HepG2 (cell line): ENCODE measurements at regions of chr3 and their contacts with region 1.

Region 1: DNA sequence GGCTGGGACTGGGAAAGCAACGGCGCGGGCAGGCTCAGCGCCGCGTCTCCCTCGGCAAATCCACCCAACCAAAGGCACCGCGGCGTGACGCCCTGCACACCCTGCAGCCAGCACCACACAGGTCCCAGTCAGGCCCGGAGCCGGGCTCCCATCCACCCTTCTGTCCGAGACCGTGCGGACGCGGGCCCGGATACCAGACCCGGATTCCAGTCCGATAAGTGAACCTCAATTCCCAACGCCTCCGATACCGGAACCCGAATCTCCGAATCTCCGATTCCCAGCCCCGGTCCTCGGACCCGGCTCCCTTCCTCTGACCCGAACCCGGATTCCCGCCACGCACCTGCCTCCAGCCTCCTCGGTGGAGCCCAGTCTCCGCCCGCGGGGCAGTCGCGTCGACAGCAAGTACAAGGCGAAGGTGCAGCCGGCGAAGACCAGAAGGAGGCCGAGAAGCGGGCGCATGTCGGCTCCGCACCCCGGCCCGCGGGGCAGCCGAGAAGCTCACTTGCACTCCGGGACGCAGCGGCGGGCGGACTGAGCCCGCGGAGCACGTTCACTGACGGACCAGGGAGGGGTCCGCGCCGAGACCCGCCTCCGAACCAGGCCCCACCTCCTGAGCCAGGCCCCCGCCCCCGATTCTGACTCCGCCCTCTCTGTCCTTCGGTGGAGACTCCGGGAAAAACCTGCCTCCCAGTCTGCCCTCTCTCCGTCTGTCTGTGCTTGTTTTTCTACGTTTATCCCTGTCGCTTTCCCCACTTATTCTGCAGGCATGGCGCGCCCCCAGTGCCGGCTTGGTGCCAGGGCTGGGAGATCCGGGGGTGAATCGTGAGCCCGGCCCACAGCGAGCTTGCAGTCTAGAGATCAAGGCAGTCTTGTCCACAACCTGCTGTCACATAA is at the start of gene TMEM41A:
- DNase-seq: peak; percentile 75
- ATAC-seq: peak; percentile 92
- H3K4me3 ChIP-seq: peak within 1 kb of the TSS; percentile 97 to 99 (median 99)
- H3K27ac ChIP-seq: peak within 1 kb of the TSS; percentile 95
- H3K4me1 ChIP-seq: peaks cover 46% of the 10 kb centered on the region
- H3K27me3 ChIP-seq: no peaks in the 10 kb centered on the region
- CTCF ChIP-seq: peak; percentile 29
- EP300 ChIP-seq: peak; percentile 37 to 56; a peak in 2 of 4 replicates
- POLR2A ChIP-seq: peak; percentile 91 to 92
- RAD21 ChIP-seq: peak; percentile 55
- total RNA-seq, gene TMEM41A: 24.2 and 40.0 TPM in 2 replicates

Region 2: GRCh38 chr3:185585859-185586685 is 87.3 kb after region 1 on chr3 and contains the start of gene SENP2:
- CTCF ChIA-PET with region 1: no interaction called
- POLR2A ChIA-PET with region 1: interaction called, 3 read pairs
- in situ Hi-C with region 1: no loop called
- intact Hi-C with region 1: loop called (anchors 5 kb)
- DNase-seq: peak; percentile 98
- ATAC-seq: peak; percentile 98
- H3K4me3 ChIP-seq: peak within 1 kb of the TSS; percentile 84 to 93 (median 89)
- H3K27ac ChIP-seq: peak within 1 kb of the TSS; percentile 82
- H3K4me1 ChIP-seq: peaks cover 33% of the 10 kb centered on the region
- H3K27me3 ChIP-seq: no peaks in the 10 kb centered on the region; a peak in 1 of 5 replicates
- CTCF ChIP-seq: no peak
- EP300 ChIP-seq: peak in 1 of 2 experiments; percentile 56; a peak in 2 of 4 replicates
- POLR2A ChIP-seq: peak; percentile 78 to 92
- RAD21 ChIP-seq: peak; percentile 45; the same call in 1 of the 2 replicates
- total RNA-seq, gene SENP2: 46.2 and 62.6 TPM in 2 replicates